ENCODE measurements at regions of chr1 and their contacts with region 1.

Region 1: GRCh38 chr1:36115931-36116330 is 9.1 kb downstream of the COL8A2 start:
- DNase-seq: no peak
- CTCF ChIP-seq: no peak

Region 2: GRCh38 chr1:35980090-35980489 is 135.8 kb before region 1 on chr1:
- CTCF ChIA-PET with region 1: no interaction called
- POLR2A ChIA-PET with region 1: no interaction called
- DNase-seq: no peak
- CTCF ChIP-seq: no peak

Region 3: DNA sequence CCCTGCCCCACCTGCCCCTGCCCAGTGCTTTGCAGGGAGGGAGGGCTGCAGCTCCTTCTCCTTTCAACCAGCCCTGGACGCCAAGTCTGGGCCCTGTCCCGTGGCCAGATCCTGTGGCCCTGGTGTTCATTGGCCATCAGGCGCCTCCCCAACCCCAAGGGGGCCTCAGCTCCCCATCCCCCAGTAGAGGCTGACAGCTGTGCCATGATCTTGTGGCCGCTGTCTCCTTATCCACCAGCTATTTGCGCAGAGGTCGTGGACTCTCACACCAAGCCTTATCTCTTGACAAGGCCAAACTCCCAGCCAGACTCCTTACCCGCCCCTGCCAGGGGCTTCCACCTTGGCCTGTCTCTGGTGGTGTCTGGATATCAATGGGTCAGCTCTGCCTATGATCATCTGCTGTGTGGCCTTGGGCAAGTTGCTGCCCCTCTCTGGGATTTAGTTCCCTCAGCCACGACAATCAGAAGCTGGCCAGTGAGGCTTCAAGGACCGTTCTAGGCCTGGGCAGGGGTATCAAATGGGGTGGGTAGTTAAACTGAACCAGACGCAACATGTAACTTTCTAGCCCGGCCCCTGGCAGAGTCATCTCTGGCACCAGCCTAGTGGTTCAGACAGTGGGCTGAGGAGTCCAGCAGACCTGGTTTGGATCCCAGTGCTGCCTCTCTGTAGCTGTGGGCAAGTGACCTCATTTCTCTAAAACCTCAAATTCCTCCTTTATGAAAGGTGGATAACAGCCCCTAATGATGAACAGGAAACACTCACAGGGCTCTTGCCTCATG is 12.4 kb after region 1 on chr1:
- CTCF ChIA-PET with region 1: interaction called, 35 read pairs
- POLR2A ChIA-PET with region 1: no interaction called
- DNase-seq: no peak
- CTCF ChIP-seq: no peak

Measured in GM10248 (cell line).